ENCODE measurements at regions of chr14 and their contacts with region 1.

Region 1: DNA sequence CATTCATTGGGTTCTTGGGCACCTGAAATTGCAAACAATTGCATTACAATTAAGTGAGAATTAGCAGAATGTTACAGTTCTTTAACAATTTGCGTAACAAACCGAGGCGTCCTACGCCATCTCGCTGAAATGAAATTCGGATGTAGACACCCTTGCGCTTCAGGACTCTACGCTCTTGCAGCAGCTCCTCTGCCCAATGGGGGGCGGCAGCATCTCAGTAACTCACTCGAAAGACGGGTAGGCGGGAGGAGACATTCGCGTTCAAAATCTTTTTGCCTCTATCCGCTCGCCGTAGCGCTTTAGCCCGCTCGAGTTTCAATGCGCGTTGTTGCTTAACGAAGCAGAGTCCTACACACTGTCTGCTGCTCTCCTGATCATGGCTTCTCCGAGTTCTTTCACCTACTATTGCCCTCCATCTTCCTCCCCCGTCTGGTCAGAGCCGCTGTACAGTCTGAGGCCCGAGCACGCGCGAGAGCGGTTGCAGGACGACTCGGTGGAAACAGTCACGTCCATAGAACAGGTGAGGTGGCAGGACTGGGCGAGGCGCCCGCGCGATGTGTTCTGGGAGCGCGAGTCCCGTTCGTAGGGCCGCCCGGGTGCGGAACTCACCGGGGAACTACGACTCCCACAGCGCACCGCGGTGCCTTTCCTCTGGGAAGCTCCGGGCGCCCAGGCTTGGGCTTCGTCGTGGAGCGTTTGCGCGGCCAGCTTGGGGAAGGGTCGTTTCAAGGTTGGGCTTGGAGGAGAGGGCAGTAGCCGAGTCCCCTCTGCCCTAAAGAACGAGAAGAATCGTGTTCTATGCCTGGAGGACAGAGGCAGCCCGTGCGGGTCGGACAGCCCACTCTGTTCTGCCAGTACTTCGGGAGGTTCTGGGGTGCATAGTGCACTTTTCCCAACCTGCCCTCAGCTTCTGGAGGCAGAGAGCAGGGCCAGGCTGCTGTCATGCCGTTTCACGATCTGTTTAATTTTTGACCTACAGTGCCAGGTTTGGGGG is at the start of gene FNTB:
- DNase-seq: peak; percentile 96
- ATAC-seq: peak; percentile 96
- H3K4me3 Mint-ChIP-seq: peak within 1 kb of the TSS; percentile 82
- H3K27ac Mint-ChIP-seq: peak within 1 kb of the TSS; percentile 99
- H3K4me1 Mint-ChIP-seq: peaks cover 46% of the 10 kb centered on the region
- H3K27me3 Mint-ChIP-seq: peaks cover 5% of the 10 kb centered on the region
- total RNA-seq, gene FNTB: 18.2 to 24.9 TPM

Region 2: DNA sequence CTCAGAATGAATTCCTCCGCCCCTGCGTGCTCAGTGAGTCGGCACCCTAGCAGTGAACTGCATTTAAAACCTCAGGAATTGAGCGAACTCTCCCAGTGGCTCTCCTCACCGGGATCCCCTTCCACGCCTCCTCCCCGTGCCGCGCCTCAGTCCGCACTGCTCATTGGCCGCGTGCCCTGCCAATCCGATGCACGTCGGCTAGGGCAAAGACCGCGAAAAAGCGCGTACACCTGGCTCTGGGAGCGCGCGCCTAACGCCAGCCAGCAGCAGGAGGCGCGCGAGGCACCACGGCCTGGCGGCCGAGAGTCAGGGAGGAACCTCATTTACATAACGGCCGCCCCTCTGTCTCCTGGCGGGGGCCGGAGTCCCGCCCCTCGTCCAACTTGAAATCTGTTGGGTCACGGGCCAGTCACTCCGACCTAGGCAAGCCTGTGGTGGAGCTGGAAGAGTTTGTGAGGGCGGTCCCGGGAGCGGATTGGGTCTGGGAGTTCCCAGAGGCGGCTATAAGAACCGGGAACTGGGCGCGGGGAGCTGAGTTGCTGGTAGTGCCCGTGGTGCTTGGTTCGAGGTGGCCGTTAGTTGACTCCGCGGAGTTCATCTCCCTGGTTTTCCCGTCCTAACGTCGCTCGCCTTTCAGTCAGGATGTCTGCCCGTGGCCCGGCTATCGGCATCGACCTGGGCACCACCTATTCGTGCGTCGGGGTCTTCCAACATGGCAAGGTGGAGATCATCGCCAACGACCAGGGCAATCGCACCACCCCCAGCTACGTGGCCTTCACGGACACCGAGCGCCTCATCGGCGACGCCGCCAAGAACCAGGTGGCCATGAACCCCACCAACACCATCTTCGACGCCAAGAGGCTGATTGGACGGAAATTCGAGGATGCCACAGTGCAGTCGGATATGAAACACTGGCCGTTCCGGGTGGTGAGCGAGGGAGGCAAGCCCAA is 446.4 kb before region 1 on chr14 and contains the start of gene HSPA2:
- CTCF ChIA-PET with region 1: no interaction called
- POLR2A ChIA-PET with region 1: no interaction called
- intact Hi-C with region 1: loop called in 1 of 2 experiments (anchors 1 kb)
- DNase-seq: peak; percentile 97
- ATAC-seq: peak; percentile 95
- H3K4me3 Mint-ChIP-seq: peak within 1 kb of the TSS; percentile 81
- H3K27ac Mint-ChIP-seq: peak within 1 kb of the TSS; percentile 96
- H3K4me1 Mint-ChIP-seq: peaks cover 28% of the 10 kb centered on the region
- H3K27me3 Mint-ChIP-seq: peaks cover 39% of the 10 kb centered on the region
- total RNA-seq, gene HSPA2: 3.2 to 4.1 TPM

Region 3: DNA sequence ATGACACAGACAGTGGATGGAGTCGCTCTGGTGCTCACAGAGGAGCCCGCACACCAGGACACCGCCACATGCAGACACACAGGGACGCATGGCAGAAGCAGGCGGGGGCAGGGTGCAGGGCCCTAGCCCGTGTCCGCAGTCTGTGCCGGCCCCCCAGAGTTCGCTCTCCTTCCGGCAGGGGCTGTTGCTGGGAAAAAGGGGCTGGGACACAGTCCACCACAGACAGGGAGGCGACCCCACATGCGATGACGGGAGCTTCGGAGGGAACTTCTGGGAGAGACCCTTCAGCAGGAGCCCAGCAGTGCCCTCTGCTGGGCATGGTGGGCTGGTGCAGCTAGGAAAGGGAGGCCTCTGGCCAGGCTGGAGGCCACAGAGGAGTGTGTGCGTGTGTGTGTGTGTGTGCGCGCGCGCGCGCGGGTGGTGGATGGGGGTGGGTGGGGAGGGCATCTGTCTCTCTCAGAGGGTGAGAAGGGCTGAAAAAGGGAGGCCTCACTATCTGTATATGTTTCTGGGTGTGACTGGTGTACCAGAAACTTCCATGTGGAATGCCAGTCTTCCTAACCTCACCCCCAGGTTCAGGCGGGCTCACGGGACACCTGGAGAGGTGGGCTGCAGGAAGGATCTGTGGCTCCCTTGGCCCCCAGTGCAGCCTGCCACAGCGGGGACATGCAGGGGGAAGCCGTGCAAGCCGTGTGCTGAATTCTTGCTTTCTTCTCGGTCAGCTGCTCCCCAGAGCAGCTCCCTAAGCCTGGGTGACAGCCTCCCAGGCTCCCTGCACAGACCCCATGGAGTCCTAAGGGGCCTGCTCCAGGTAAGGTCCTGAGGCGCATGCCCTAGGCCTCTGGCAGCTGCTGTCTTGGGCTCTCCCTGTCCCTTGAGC is 222.0 kb before region 1 on chr14:
- CTCF ChIA-PET with region 1: no interaction called
- POLR2A ChIA-PET with region 1: no interaction called
- intact Hi-C with region 1: loop called in 1 of 2 experiments (anchors 1 kb)
- DNase-seq: peak; percentile 80
- ATAC-seq: peak; percentile 84
- H3K4me3 Mint-ChIP-seq: peak overlapping the region; percentile 42
- H3K27ac Mint-ChIP-seq: no peak overlapping the region
- H3K4me1 Mint-ChIP-seq: peaks cover 35% of the 10 kb centered on the region
- H3K27me3 Mint-ChIP-seq: no peaks in the 10 kb centered on the region

Region 4: GRCh38 chr14:64838662-64839061 is 148.2 kb before region 1 on chr14:
- CTCF ChIA-PET with region 1: no interaction called
- POLR2A ChIA-PET with region 1: no interaction called
- intact Hi-C with region 1: no loop called
- DNase-seq: no peak
- ATAC-seq: no peak
- H3K4me3 Mint-ChIP-seq: no peak overlapping the region
- H3K27ac Mint-ChIP-seq: no peak overlapping the region
- H3K4me1 Mint-ChIP-seq: no peaks in the 10 kb centered on the region
- H3K27me3 Mint-ChIP-seq: peaks cover 21% of the 10 kb centered on the region

Region 5: DNA sequence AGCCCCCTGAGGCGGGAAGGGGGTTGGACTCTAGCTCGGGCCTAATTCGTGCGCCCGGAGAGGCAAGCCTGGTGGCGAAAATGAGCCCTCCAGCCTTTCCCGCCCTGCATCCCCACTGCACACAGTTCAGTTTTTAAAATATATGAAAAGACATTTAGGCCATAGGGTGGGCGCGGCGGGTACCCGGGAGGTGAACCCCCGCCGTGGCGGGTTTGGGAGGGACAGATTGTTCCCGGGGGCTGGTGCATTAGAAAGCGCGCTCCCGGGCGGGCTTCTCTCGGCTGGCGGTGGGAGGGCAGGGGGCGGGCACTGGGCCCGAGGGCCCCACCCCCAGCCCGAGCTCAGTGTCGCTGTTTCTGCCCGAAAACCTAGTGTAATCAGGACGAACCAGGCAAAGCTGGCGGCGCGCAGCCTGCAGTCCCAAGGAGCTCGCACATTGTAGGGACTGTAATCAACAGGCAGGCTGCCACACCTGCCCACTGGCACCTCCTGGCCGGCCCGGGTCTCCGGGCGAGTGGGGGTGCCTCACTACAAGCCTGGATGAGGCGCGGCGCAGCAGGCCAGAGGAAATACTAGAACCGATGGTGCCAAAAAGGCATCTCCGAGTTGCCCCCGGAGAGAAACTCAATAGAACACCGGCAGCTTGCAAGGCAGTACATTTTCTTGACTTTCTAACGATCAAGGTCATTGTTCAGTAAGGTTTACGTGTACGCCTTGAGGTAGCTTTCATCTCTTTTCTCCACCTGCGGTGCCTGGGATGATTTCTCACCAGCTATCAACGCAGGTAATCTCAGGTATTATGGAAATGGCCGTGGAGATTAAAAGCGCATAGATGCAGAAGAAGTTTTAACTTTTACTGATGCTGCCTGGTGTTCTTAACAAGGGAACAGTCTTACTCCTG is 106.4 kb before region 1 on chr14:
- CTCF ChIA-PET with region 1: interaction called, 13 read pairs
- POLR2A ChIA-PET with region 1: no interaction called
- intact Hi-C with region 1: no loop called
- DNase-seq: peak; percentile 79
- ATAC-seq: peak; percentile 89
- H3K4me3 Mint-ChIP-seq: peak overlapping the region; percentile 72
- H3K27ac Mint-ChIP-seq: no peak overlapping the region
- H3K4me1 Mint-ChIP-seq: peaks cover 10% of the 10 kb centered on the region
- H3K27me3 Mint-ChIP-seq: peaks cover 25% of the 10 kb centered on the region

Region 6: DNA sequence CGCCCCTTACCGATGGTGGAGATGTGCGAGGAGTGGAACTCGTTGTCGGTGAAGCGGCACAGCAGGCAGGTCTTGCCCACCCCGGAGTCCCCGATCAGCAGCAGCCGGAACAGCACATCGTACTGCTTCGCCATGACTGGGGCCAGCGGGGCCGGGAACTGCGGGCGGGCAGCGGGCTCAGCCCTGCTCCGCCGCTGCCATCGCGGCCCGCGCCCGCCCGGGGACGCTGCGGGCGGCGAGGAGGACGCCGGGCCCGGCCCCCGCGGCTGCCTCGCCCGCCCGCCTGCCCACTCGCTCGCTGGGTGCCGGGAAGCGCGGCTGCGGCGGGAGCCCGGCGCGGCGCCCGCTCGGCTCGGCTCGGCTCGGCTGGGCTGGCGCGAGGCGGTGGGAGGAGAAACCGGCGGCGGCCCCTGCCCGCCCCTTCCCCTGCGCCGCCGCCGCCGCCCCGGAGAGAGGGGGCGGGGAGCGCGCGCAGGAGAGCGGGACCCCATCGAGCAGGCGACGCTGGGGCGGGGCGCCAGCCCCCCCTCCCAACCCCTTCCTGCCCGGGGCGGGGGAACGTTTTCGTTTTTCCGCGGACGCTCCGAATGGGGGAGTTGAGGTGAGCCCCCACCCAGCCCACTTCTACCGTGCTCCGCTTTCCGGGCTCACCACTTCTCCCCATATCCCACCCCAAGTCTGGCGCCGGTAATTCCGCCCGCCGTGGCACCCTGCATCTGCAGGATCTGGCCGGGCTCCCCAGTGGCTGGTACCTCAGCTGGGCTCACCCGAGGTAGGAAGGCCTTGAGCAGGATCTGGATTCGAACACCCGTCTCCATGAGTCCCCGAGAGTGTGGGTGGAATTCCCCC is 14.7 kb before region 1 on chr14 and contains the start of gene RAB15:
- CTCF ChIA-PET with region 1: interaction called, 5 read pairs
- POLR2A ChIA-PET with region 1: no interaction called
- intact Hi-C with region 1: loop called in 1 of 2 experiments (anchors 1 kb)
- DNase-seq: peak; percentile 58
- ATAC-seq: peak; percentile 71
- H3K4me3 Mint-ChIP-seq: peak within 1 kb of the TSS; percentile 74
- H3K27ac Mint-ChIP-seq: peak within 1 kb of the TSS; percentile 51
- H3K4me1 Mint-ChIP-seq: peaks cover 17% of the 10 kb centered on the region
- H3K27me3 Mint-ChIP-seq: no peaks in the 10 kb centered on the region
- total RNA-seq, gene RAB15: 3.7 to 5.3 TPM

Region 7: DNA sequence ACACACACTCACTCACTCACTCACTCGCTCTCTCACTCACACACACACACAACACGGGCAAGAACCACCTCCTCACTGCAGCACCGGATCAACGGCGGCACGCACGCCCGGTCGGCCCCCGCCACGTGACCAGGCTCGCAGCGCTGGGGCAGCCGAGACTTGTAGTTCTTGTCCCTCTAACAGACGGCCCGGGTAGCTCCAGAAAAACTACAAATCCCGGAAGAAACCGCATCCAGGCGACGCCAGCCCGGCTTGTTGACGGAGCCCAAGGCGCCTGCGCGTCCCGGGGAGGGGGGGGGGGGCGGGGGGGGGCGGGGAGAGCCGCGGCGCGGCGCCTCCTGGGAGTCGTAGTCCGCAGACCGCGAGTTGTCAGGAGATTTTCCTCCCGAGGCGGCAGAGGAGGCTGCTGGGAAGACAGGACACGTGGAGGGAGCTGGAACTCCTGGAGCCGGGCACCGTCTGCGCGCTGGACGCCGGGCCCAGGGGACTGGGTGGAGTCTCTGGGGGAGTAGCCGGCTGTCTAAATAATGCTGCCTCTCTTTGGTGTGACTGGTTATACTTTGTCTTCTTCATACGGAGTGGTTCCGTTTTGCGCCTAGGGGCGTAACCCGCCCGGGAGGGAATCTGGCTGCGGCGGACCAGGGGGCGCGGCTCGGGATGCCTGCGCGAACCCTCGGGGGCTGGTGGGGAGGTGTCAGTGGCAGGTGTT is 115.7 kb after region 1 on chr14 and contains the start of gene MAX:
- CTCF ChIA-PET with region 1: interaction called, 4 read pairs
- POLR2A ChIA-PET with region 1: no interaction called
- intact Hi-C with region 1: loop called (anchors 1 kb)
- DNase-seq: peak; percentile 99
- ATAC-seq: peak; percentile 95
- H3K4me3 Mint-ChIP-seq: peak within 1 kb of the TSS; percentile 89
- H3K27ac Mint-ChIP-seq: peak within 1 kb of the TSS; percentile 96
- H3K4me1 Mint-ChIP-seq: peaks cover 40% of the 10 kb centered on the region
- H3K27me3 Mint-ChIP-seq: peaks cover 2% of the 10 kb centered on the region
- total RNA-seq, gene MAX: 93.6 to 136 TPM

Region 8: DNA sequence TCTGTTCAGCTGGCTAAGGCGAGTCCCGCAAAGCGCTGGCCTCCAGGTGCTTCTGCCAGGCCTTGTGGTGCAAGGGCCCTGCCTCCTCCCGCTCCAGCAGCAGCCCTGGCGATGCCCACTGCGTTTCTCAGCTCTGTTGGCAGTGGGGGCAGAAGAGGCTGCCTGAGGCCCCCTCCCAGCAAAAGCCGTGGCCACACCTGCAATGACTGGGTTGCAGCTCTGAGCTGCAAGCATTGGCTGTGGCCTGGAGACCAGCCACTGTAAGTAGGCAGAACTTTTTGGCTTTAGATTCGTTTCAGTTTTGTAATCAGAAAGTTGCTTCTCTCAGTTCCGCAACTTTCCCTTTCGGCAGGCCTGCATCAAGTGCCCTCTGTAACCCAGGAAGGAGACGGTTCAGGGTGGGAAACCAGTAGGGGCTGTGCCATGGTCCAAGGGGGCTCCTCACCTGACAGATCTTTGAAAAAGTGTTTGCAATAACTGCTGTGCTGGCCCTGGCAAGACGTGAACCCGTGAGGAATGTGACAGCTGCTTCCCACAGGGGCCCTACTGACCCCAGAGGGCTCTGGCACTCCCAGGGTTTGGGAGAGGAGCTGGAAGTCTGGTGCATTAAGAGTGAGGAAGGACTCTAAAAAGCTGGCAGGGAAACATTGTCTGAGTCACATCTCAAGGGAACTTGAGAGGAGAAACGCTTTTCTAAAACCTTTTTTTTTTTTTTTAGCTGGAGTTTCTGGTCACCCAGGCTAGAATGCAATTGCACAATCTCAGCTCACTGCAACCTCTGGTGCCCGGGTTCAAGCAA is 169.9 kb after region 1 on chr14:
- CTCF ChIA-PET with region 1: no interaction called
- POLR2A ChIA-PET with region 1: no interaction called
- intact Hi-C with region 1: no loop called
- DNase-seq: no peak
- ATAC-seq: no peak
- H3K4me3 Mint-ChIP-seq: no peak overlapping the region
- H3K27ac Mint-ChIP-seq: no peak overlapping the region
- H3K4me1 Mint-ChIP-seq: peaks cover 10% of the 10 kb centered on the region
- H3K27me3 Mint-ChIP-seq: no peaks in the 10 kb centered on the region

Region 9: DNA sequence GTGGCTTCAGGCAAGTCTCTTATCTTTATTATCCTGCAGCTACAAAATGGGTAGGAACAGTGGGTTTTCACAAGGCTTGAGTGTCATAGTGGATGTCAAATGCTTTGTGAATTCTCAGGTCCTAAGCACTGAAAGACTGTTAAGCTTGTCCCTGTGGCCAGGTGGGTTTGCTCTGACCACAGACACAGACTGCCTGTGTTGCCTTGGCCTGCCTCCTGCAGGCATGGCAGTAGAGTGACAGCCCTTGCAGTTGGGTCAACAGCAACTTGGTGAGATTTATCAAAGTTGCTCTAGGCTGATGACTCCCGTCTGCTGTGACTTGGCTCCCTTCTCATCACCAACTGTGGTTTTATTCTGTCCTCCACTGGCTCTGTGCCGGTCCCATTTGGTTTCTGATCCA is 979.3 kb after region 1 on chr14:
- CTCF ChIA-PET with region 1: no interaction called
- POLR2A ChIA-PET with region 1: no interaction called
- intact Hi-C with region 1: no loop called
- DNase-seq: no peak
- ATAC-seq: no peak
- H3K4me3 Mint-ChIP-seq: no peak overlapping the region
- H3K27ac Mint-ChIP-seq: no peak overlapping the region
- H3K4me1 Mint-ChIP-seq: no peaks in the 10 kb centered on the region
- H3K27me3 Mint-ChIP-seq: no peaks in the 10 kb centered on the region

Measured in activated CD4-positive, alpha-beta T cell treated with anti-CD3 and anti-CD28 coated beads for 36 hours (primary cell).